Ascending aorta (tissue), 2 donors: ENCODE measurements at regions of chr7 and their contacts with region 1.

Region 1: GRCh38 chr7:151244196-151244840 is 4.2 kb downstream of the SMARCD3 start:
- DNase-seq: peak in 1 of 2 donors; percentile 72
- H3K4me3 ChIP-seq: peak overlapping the region in 1 of 2 donors; percentile 74
- H3K27ac ChIP-seq: peak overlapping the region in 1 of 2 donors; percentile 95
- H3K4me1 ChIP-seq: peaks cover 28 to 33% of the 10 kb centered on the region in 2 donors
- H3K27me3 ChIP-seq: no peaks in the 10 kb centered on the region
- CTCF ChIP-seq: peak; percentile 54 to 92 (median 91)

Region 2: DNA sequence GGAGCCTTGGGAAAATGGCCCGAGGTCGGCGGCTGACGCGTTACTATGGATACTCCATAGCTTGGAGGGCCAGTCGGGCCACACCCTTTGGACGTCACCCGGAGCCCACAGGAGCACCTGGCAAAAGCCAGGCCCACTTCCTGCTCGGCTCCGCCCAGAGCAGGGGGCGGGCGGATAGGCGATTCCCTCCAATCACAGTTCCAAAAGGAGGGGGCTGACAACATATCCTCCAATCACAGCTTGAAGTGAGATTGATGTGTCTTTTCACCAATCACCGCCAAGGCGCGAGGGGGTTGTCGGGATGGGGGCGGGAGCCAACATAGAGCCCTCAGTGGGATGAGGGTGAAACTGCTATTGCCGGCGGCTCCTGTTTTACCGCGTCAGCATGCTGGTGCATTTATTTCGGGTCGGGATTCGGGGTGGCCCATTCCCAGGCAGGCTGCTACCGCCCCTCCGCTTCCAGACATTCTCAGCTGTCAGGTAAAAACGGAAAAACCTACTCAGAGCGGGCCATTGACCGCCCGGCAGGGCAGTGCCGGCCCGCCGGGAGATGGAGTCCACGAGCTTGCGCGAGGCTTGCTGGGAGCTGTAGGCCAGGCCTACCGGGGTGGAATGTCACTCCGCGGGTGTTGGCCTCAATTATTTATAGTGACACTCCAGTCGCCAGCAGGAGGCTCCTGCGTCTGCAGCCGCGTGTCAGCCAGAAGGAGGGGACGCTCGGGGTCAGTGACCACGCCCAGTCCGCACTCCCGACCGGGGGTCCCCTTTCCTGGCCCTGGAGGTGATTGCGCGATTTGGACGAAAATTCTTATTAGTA is 216.0 kb before region 1 on chr7 and contains the start of gene ABCB8:
- intact Hi-C with region 1: no loop called
- DNase-seq: peak; percentile 98 to 100
- H3K4me3 ChIP-seq: peak within 1 kb of the TSS; percentile 68 to 77
- H3K27ac ChIP-seq: peak within 1 kb of the TSS; percentile 60 to 78
- H3K4me1 ChIP-seq: peaks cover 0 to 7% of the 10 kb centered on the region in 2 donors
- H3K27me3 ChIP-seq: no peaks in the 10 kb centered on the region
- CTCF ChIP-seq: peak in 2 of 3 experiments; percentile 59 to 68
- total RNA-seq, gene ABCB8: 50.8 TPM

Region 3: GRCh38 chr7:151080522-151081169 is 163.7 kb before region 1 on chr7 and contains the start of gene FASTK:
- intact Hi-C with region 1: loop called (anchors 5 kb)
- DNase-seq: peak; percentile 84 to 95
- H3K4me3 ChIP-seq: peak within 1 kb of the TSS; percentile 75 to 87
- H3K27ac ChIP-seq: peak within 1 kb of the TSS; percentile 95 to 96
- H3K4me1 ChIP-seq: peaks cover 24 to 35% of the 10 kb centered on the region in 2 donors
- H3K27me3 ChIP-seq: no peaks in the 10 kb centered on the region
- CTCF ChIP-seq: no peak
- total RNA-seq, gene FASTK: 121 TPM

Region 4: DNA sequence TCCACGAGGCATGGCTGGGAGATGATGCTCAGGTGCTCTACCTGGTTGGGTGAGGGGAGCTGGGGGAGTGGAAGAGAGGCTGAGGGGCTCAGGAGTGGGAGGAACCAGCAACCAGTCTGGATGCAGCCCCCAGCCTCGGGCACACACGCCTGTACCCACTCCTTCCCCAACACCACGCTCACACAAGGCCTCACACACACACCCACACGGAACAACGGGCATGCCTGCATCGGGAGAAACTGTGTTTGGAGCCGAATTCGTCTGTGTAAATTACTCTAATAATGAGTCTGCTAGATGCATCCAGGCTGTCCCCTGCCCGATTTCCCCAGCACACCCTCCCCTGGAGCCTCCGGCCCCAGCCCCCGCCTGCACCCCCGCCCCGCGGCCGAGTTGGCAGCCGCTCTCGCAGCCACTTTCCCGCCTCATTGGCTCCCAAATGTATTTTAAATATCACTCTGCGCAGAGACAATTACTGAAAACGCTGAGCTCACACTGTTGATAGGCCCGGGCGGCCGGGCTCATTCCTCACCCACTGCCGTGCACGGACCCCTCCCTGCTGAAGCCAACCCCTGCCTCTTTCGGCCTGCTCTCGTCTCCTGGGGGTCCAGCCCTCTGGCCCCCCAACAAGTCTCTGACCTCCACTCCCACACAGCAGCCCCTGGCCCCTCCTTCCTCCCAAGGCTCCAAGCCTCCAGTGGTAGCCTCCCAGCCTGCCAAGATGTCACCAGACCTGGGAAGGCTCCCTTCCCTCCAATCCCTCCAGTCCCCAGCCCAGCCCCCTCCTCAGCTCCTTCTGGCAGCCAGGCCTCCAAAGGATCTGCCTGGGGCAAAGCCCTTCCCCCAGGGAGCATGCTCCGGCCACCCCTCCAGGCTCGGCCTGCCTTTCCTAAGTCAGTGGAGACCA is 45.1 kb before region 1 on chr7:
- intact Hi-C with region 1: no loop called
- DNase-seq: no peak
- H3K4me3 ChIP-seq: no peak overlapping the region
- H3K27ac ChIP-seq: no peak overlapping the region
- H3K4me1 ChIP-seq: no peaks in the 10 kb centered on the region
- H3K27me3 ChIP-seq: no peaks in the 10 kb centered on the region
- CTCF ChIP-seq: no peak

Region 5: DNA sequence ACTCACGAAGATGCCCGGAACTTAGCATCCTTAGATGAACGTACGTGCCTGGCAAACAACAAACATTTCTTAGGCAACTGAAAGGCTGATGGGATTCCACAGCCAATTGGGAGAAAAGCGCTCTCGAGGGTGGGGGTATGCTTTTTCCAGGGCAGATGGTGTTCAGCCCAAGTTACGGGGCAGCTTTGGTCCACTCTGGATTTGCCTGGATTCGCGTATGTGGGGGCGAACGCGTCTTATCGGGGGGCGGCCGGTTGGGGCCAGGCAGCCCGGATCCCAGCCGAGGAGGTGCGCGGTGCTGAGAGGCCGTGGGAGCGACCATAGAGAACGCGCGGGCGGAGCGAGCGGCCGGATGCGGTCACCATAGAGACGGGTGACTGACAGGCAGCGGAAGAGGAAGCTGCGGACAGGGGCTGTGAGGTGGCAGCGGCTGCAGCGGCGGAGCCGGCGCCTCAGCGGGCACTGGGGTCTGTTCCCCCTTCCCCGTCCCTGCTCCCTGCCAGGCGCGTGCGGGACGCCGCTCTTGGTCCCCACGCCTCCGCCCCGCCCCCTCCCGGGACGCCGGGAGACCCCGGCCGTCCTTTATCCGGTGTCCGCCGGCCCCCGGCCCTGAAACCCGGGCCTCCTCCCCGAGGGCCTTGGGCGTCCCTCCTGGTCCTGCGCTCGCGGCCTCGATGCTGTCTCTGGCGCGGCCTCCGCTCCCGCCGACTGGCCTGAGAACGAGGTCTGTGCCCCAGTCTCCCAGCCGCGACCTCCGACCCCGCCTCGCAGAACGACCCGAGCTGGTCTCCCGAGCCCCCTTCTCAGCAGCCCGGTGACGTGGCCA is 12.0 kb before region 1 on chr7 and contains the start of gene CHPF2:
- intact Hi-C with region 1: loop called (anchors 1 kb)
- DNase-seq: peak; percentile 72 to 95
- H3K4me3 ChIP-seq: peak within 1 kb of the TSS; percentile 91 to 99
- H3K27ac ChIP-seq: peak within 1 kb of the TSS; percentile 93
- H3K4me1 ChIP-seq: peaks cover 7 to 8% of the 10 kb centered on the region in 2 donors
- H3K27me3 ChIP-seq: no peaks in the 10 kb centered on the region
- CTCF ChIP-seq: no peak
- total RNA-seq, gene CHPF2: 40.3 TPM

Region 6: GRCh38 chr7:151368136-151368571 is 123.8 kb after region 1 on chr7:
- intact Hi-C with region 1: loop called (anchors 5 kb)
- DNase-seq: peak in 1 of 2 donors; percentile 90
- H3K4me3 ChIP-seq: no peak overlapping the region
- H3K27ac ChIP-seq: no peak overlapping the region
- H3K4me1 ChIP-seq: peaks cover 6 to 37% of the 10 kb centered on the region in 2 donors
- H3K27me3 ChIP-seq: no peaks in the 10 kb centered on the region
- CTCF ChIP-seq: peak; percentile 90 to 97 (median 92)

Region 7: DNA sequence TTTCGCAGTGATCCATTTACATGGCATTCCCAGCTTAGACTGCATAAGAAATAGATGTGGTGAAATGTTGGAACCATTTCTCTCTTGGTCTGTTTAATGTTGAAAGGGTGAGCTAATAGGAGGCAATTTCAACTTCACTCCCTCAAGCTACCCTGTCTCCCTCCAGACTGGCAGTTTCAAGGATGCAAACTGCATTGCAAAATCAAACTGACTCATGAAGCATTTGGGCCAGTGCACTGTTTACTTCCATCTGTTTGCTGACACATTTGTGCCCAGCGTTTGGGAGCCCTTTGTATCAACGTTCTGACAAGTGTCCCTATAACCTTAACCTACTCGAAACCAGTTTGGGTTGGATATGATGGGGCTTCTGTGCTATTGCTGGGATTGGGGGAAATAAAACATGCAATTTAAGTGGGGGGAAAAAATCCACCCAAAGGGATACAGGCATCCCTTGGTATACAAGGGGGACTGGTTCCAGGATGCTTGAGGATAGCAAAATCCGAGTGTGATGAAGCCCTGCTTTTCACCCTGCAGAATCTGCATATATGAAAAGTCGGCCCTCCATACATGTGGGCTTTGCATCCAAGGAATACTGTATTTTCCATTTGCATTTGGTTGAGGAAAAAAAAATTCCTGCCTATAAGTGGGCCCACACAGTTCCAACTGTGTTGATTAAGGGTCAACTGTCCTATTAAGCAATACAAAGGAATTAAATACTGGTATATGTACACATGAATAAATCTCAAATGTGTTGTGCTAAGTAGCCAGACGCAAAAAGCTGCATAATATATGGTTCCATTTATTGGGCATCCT is 259.8 kb after region 1 on chr7:
- intact Hi-C with region 1: loop called (anchors 10 kb)
- DNase-seq: peak; percentile 15 to 83
- H3K4me3 ChIP-seq: no peak overlapping the region
- H3K27ac ChIP-seq: peak overlapping the region in 1 of 2 donors; percentile 33
- H3K4me1 ChIP-seq: peaks cover under 1 to 32% of the 10 kb centered on the region in 2 donors
- H3K27me3 ChIP-seq: no peaks in the 10 kb centered on the region
- CTCF ChIP-seq: no peak

Region 8: DNA sequence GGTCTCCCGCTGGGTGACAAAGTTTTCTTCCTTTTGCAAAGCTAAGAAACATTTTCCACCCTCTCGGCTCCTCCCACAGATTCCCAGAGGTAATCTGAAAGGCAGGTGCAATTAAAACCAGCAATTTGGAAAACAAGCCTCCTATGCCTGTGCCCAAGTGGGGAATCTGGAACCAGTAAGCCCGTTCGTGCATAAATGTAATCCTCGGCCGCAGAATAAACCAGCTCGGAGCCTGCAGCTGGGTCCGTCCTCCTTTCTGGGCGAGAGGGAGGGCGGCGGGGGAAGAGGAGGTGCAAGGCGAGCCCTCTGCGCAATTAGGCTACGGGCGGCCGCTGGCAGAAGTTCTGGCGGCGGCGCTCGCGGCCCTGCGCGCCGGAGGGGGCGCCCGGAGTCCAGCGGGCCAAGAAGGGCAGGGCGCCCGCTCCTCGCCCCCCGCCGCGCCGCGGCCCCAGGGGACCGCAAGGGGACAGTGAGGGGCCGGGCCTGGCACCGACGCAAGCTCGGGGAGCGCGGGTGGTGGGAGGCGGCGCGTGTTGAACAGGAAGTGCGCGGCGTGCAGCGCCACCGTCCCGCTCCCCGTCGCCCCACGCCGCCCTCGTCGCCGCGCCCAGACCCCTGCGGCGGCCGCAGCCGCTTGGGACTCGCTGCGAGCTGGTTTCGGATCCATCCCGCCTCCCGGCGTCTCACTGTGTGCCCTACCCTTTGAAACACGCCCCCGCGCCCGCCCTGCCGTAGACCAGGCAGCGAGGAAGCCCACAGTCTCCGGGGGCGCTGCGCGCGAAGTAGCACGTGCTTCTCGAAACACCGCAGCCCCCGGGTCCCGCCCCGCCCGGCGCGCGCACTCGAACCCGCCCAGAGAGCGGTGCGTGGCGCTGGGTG is 632.8 kb after region 1 on chr7 and contains the start of gene PRKAG2:
- intact Hi-C with region 1: loop called (anchors 10 kb)
- DNase-seq: peak in 1 of 2 donors; percentile 87
- H3K4me3 ChIP-seq: peak within 1 kb of the TSS; percentile 93 to 95
- H3K27ac ChIP-seq: peak within 1 kb of the TSS; percentile 76 to 78
- H3K4me1 ChIP-seq: peaks cover 5 to 18% of the 10 kb centered on the region in 2 donors
- H3K27me3 ChIP-seq: no peaks in the 10 kb centered on the region
- CTCF ChIP-seq: peak in 1 of 3 experiments; percentile 3
- total RNA-seq, gene PRKAG2: 26.7 TPM